AG04450 (cell line): ENCODE measurements at regions of chr12 and their contacts with region 1.

Region 1: DNA sequence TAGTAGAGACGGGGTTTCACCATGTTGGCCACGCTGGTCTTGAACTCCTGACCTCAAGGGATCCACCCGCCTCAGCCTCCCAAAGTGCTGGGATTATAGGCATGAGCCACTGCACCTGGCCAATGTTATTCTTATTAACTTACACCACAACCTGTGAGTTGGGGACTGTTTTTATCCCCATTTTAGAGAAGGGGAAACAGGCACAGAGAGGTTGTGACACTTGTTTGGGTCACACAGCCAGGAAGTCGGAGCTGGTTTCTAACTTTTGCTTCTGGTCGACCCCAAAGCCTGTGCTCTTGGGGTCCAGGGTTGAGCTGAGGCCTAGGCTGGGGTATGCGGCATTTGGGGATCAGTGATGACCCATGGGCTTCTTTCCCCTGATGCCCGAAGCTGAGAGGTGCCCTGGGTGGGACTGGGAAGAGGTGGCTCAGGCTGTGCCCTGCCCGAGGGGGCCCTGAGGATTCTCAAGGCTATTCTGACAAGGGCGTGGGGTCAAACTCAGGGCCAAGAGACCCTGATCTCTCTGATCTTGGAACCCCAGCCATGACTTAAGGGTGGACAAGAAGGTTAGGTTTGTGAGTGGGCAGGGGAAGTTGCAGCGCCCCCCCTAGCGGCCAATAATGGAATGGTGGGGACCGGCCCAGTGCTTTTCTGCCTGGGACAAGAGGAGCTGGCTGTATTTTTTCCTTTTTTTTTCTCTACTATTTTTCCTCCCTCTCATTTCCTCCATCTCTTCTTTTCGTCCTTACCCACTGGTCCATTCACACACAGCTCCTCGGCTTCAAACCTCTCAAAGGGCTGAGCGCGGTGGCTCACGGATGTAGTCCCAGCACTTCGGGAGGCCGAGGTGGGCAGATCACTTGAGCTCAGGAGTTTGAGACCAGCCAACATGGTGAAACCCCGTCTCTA is 3.0 kb downstream of the SDSL start:
- DNase-seq: no peak
- H3K4me3 ChIP-seq: no peak overlapping the region
- H3K27ac ChIP-seq: no peak overlapping the region
- H3K27me3 ChIP-seq: no peaks in the 10 kb centered on the region
- CTCF ChIP-seq: peak; percentile 93

Region 2: DNA sequence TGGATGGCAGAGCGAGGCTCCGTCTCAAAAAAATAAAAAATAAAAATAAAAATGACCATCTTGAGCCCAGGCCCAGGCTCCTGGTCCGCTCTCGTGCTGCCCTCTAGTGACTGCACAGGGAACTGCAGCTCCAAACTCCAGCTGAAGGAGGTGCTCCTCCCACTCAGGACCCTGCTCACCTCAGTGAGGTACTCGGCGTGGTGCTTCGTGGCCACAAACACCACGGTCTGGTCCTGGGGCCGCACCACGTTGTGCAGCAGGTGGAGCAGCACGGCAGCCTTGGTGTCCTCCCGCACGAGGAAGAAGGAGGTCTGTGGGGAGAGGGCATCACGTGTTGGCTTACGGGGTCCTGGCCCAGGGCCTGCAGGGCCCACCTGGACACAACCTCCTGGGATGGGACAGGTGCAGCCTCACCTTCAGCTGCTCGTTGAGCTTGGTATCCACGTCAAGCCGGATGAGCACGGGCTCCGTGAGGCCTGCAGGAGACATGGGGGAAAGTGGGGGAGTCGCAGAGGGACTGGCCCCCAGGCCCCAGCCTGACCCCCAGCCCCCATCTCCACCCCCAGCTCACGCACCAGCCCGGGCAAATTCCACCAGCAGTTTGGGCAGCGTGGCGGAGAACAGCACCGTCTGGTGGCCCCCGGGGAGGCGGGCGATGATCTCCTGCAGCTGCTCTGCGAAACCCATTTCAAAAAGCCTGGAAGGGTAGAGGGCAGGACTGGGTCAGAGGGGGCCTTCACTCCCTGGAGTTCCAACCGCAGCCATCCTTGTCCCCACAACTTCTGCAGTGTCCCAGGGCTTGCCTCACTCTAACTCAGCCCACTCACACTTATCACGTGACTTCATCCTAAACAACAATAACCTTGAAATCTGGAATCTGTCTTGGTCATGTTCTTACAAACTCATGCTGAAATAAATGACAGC is 250.4 kb before region 1 on chr12:
- CTCF ChIA-PET with region 1: interaction called, 14 read pairs
- POLR2A ChIA-PET with region 1: no interaction called
- DNase-seq: no peak
- H3K4me3 ChIP-seq: no peak overlapping the region
- H3K27ac ChIP-seq: no peak overlapping the region
- H3K27me3 ChIP-seq: no peaks in the 10 kb centered on the region
- CTCF ChIP-seq: peak; percentile 99

Region 3: GRCh38 chr12:113221181-113221997 is 203.8 kb before region 1 on chr12 and contains the start of gene TPCN1:
- CTCF ChIA-PET with region 1: interaction called, 14 read pairs
- POLR2A ChIA-PET with region 1: no interaction called
- DNase-seq: peak; percentile 100
- H3K4me3 ChIP-seq: peak within 1 kb of the TSS; percentile 89
- H3K27ac ChIP-seq: peak within 1 kb of the TSS; percentile 42
- H3K27me3 ChIP-seq: no peaks in the 10 kb centered on the region
- CTCF ChIP-seq: no peak
- polyA plus RNA-seq, gene TPCN1: 10.9 and 11.9 TPM in 2 replicates

Region 4: GRCh38 chr12:113316155-113316554 is 109.0 kb before region 1 on chr12:
- CTCF ChIA-PET with region 1: interaction called, 53 read pairs
- POLR2A ChIA-PET with region 1: interaction called, 3 read pairs
- DNase-seq: no peak
- H3K4me3 ChIP-seq: no peak overlapping the region
- H3K27ac ChIP-seq: no peak overlapping the region
- H3K27me3 ChIP-seq: no peaks in the 10 kb centered on the region
- CTCF ChIP-seq: peak; percentile 13; the same call in 1 of the 2 replicates

Region 5: DNA sequence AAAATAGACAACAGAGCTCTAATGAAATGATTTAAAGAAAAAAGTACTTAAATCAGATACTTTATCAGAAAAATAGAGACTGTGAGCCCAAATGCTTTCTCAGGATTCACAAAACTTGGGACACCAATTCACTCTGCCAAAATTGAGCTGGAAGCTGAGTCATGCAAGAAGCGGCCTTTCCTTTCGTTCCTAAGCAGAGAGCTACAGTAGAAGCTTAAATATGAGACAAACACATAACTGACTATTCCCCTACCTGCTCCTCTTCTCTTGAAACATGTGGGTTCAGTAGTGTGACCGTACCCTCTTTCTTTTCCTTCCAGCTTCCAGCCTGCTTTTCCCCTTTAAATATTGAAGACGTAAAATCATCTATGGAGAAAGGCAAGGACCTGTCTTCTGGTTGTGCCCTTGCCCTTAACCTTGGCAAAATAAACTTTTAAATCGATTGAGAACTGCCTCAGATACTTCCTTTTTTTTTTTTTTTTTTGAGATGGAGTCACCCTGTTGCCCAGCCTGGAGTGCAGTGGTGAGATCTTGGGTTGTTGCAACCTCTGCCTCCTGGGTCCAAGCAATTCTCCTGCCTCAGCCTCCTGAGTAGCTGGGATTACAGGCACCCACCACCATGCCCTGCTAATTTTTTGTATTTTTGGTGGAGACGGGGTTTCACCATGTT is 17.1 kb before region 1 on chr12:
- CTCF ChIA-PET with region 1: interaction called, 25 read pairs
- POLR2A ChIA-PET with region 1: no interaction called
- DNase-seq: no peak
- H3K4me3 ChIP-seq: no peak overlapping the region
- H3K27ac ChIP-seq: no peak overlapping the region
- H3K27me3 ChIP-seq: peaks cover 11% of the 10 kb centered on the region
- CTCF ChIP-seq: no peak

Region 6: GRCh38 chr12:113436586-113436985 is 11.4 kb after region 1 on chr12:
- CTCF ChIA-PET with region 1: interaction called, 24 read pairs
- POLR2A ChIA-PET with region 1: no interaction called
- DNase-seq: no peak
- H3K4me3 ChIP-seq: no peak overlapping the region
- H3K27ac ChIP-seq: no peak overlapping the region
- H3K27me3 ChIP-seq: peaks cover 7% of the 10 kb centered on the region
- CTCF ChIP-seq: no peak

Region 7: DNA sequence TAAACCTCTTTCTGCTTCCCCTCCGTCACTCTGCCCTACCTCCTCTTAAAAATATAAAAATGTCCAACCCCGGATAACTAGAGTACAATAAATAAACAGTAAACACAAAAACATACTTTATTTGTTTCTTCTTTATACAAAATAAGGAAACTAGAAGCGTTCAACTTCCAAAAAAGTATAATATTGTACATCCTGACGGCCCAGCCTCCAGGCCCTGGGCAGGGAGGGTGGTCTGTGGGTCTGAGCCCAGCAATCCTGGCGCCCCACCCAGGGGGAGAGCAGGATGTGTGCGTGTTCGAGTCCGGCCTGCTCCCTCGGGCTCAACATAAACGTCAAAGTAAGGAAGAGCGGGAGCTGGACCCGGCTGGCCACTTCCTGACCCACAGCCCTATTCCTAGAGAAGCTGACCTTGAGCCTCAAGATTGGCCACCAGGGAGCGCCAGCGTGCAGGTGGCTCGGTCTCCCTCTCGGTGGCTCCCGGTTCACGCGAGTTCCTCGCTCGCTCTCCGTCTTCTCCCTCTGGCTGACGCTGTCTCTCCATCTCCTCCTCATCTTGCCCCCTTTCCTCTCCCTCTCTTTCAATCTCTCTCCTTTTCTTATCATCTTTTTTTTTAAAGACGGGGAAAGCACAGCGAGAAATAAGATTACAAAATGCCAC is 37.1 kb after region 1 on chr12:
- CTCF ChIA-PET with region 1: interaction called, 11 read pairs
- POLR2A ChIA-PET with region 1: no interaction called
- DNase-seq: peak; percentile 29
- H3K4me3 ChIP-seq: peak overlapping the region; percentile 29
- H3K27ac ChIP-seq: no peak overlapping the region
- H3K27me3 ChIP-seq: peaks cover 64% of the 10 kb centered on the region
- CTCF ChIP-seq: peak; percentile 92

Region 8: DNA sequence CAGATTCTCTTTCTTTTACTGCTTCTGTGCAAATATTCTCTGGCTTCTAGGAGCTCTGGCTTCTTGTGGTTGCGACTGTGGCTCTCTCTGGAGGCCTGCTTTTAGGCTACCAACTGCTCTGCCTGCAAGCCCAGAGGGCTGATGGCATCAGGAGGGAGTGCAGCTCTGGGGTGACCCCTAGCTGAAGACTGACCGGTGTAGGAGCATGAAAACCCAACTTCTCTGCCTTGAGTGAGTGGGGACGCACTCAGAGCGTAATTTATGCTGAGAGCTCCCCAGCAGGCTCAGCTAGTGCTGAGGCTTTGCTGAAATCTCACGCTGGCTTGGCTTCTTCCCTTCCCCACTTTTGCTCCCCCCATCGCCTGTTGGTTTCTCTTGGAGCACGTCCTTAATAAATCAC is 570.9 kb after region 1 on chr12:
- CTCF ChIA-PET with region 1: no interaction called
- POLR2A ChIA-PET with region 1: no interaction called
- DNase-seq: no peak
- H3K4me3 ChIP-seq: no peak overlapping the region
- H3K27ac ChIP-seq: no peak overlapping the region
- H3K27me3 ChIP-seq: peaks cover 7% of the 10 kb centered on the region
- CTCF ChIP-seq: no peak